Heart left ventricle (tissue), 16 donors: ENCODE measurements at regions of chr2 and their contacts with region 1.

Region 1: DNA sequence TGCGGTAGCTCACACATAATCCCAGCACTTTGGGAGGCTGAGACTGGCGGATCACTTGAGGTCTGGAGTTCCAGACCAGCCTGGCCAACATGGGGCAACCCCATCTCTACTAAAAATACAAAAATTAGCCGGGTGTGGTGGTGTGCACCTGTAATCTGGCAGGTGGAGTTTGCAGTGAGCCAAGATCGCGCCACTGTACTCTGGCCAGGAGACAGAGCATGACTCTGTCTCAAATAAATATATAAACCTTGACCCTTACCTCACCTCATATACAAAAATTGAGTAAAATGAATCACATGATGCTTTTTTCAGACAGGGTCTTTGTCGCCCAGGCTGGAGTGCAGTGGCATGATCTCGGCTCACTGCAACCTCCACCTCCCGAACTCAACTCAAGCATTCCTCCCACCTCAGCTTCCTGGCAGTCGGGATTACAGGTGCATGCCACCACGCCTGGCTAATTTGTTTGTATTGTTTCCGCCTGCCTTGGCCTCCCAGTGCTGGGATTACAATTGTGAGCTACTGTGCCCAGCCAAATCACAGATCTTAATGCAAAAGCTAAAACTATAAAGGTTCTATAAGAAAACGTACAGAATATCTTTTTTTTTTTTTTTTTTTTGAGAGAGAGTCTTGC is 25.3 kb downstream of the XPO1 start:
- DNase-seq: no peak
- ATAC-seq: no peak
- H3K4me3 ChIP-seq: no peak overlapping the region
- H3K27ac ChIP-seq: no peak overlapping the region
- H3K4me1 ChIP-seq: peaks cover 0 to 5% (median 0%) of the 10 kb centered on the region in 12 donors
- H3K27me3 ChIP-seq: no peaks in the 10 kb centered on the region
- CTCF ChIP-seq: no peak
- POLR2A ChIP-seq: no peak

Region 2: DNA sequence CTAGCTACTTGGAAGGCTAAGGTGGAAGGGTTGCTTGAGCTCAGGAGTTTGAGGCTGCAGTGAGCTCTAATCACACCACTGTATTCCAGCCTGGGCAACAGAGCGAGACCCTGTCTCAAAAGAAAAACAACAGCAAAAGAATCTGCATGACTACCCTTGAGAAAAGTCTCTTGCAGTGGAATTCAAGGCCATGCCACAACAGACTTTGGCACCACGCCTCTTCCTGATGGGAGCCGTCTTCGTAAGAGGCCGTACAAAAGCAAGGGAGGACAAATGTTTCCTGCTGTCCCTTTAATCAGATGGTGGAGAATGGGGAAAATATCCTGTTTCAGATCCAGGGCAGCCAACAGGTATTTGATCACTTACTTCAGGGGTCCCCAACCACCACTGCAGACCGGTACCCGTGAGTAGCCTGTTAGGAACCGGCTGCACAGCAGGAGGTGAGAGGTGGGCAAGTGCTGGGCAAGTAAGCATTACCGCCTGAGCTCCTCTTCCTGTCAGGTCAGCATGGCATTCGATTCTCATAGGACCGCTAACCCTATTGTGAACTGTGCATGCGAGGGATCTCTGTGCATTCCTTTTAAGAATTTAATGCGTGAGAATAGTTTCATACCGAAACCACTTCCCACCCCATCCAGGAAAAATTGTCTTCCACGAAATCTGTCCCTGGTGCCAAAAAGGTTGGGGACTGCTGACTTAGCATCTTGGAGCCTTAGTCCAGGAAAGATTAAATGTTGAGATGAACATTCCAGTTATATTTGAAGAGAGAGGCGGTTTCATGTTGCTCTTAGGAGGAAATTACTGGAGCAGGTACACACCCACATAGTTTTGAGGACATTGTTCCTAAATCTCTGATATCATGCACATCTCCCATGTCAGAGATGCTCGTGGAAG is 119.6 kb after region 1 on chr2:
- intact Hi-C with region 1: loop called in 1 of 10 experiments (anchors 10 kb)
- DNase-seq: no peak
- ATAC-seq: no peak
- H3K4me3 ChIP-seq: peak overlapping the region in 4 of 12 donors; percentile 14 to 25 (median 20)
- H3K27ac ChIP-seq: no peak overlapping the region
- H3K4me1 ChIP-seq: no peaks in the 10 kb centered on the region
- H3K27me3 ChIP-seq: no peaks in the 10 kb centered on the region
- CTCF ChIP-seq: no peak
- POLR2A ChIP-seq: no peak